Right ventricle myocardium inferior (tissue), 1 donor: ENCODE measurements at regions of chrX and their contacts with region 1.

Region 1: DNA sequence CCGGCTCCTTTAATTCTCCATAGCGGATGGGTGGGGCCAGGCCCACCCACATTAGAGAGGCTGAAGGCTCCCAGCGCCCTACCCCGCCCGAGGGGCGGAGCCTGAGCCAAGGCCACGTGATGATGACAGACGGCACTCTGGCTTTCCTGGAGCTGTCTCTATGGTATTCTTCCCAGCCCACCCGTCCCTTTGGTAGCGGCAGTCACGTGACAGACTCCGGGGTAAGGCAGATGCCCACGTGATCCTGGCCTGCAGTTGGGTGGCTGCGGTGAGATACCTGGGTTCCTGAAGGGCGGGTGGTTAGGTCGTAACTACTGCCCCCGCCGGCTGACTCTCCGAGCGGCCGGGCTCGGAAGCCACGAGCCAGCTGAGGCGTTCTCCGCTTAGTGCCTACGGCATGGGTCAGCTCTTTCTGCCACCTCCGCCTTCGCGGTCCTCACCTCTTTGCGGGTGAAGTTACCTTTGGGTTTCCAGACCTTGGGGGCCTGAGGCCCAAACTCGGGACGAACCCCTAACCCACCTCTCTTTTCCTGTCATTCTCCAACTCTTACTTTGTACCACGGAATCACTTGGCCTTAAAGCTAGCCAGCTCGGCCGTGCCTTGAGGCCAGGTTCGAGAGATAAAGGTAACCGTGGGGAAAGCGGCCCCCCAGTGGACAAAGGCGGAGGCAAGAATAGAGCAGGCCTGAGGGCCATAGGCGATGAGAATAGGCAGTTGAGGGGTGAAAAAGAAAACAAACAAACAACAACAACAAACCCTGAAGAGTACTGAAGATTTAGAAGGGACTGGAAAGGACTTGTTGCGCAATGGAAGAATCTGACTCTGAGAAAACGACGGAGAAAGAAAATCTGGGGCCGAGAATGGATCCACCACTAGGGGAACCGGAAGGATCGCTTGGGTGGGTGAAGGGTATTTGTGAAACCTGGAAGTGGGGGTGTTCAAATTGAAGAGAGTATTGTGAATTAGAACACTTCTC is at the start of gene RRAGB:
- DNase-seq: peak; percentile 95
- ATAC-seq: peak; percentile 100
- total RNA-seq, gene RRAGB: 12.7 TPM

Region 2: DNA sequence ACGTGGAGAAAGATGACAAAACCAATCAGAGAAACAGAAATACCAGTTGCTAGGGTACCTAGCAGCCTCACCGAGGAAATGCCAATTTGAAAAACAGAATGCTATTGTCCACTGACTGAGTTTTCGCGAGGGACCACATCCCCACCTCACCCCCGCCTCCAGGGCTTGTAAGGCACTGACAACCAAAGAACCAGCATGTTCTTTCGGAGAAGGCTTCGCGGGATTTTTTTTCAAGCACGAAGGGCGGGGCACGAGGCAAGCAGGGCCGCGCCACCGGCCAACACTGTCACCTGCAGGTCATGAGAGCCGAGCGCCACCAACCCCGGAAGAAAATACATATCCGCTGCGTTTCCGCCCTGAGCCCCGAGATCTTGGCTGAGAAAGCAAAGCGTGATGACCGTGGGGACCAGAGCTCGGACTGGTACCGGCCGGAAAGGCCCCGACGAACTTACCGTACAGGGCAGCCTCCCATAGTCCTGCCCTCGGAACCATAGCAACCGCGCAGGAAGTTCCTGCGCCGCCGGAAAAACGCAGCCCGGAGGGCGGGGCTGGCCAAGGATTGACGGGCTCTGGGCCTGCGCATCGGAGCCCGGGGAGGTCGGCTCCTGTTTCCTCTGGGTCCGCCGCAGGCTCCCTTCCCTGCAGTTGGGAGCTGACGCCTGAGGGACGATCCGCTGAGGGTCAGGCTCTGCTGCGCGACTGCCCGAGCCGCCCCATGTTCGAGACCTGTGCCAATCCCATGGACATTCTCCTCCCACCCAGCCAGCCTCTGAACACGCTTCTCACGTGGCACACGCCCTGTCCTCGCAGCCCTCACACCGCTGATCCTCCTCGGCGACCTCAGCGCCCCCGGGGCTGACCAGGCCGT is 556.9 kb before region 1 on chrX:
- intact Hi-C with region 1: loop called (anchors 5 kb)
- DNase-seq: peak; percentile 92
- ATAC-seq: peak; percentile 100

Region 3: GRCh38 chrX:56248492-56248891 is 530.7 kb after region 1 on chrX:
- intact Hi-C with region 1: loop called (anchors 10 kb)
- DNase-seq: no peak
- ATAC-seq: no peak

Region 4: GRCh38 chrX:56309881-56310280 is 592.1 kb after region 1 on chrX:
- intact Hi-C with region 1: no loop called
- DNase-seq: no peak
- ATAC-seq: no peak